HCT116 (cell line): ENCODE measurements at regions of chr11 and their contacts with region 1.

Region 1: GRCh38 chr11:116835791-116836631 is 1.4 kb downstream of the APOA1 start:
- DNase-seq: peak; percentile 88
- ATAC-seq: peak; percentile 95
- H3K4me3 ChIP-seq: peak overlapping the region; percentile 26 to 42
- H3K27ac ChIP-seq: peak overlapping the region; percentile 40; the same call in 1 of the 2 replicates
- H3K4me1 ChIP-seq: peaks cover 8 to 15% of the 10 kb centered on the region in 2 experiments
- H3K27me3 ChIP-seq: no peaks in the 10 kb centered on the region
- CTCF ChIP-seq: peak; percentile 67 to 85 (median 70)
- POLR2A ChIP-seq: no peak
- RAD21 ChIP-seq: peak; percentile 77

Region 2: GRCh38 chr11:116732271-116733042 is 103.6 kb before region 1 on chr11:
- CTCF ChIA-PET with region 1: interaction called, 11 read pairs
- POLR2A ChIA-PET with region 1: no interaction called
- RAD21 ChIA-PET with region 1: interaction called in 1 of 2 experiments, 3 read pairs
- intact Hi-C with region 1: no loop called
- DNase-seq: peak; percentile 45
- ATAC-seq: peak; percentile 94
- H3K4me3 ChIP-seq: no peak overlapping the region
- H3K27ac ChIP-seq: no peak overlapping the region
- H3K4me1 ChIP-seq: peaks cover 0 to 4% of the 10 kb centered on the region in 2 experiments; a peak in 1 of 4 replicates
- H3K27me3 ChIP-seq: no peaks in the 10 kb centered on the region
- CTCF ChIP-seq: peak; percentile 64 to 90 (median 73); a peak in 5 of 6 replicates
- POLR2A ChIP-seq: no peak
- RAD21 ChIP-seq: peak; percentile 60

Region 3: DNA sequence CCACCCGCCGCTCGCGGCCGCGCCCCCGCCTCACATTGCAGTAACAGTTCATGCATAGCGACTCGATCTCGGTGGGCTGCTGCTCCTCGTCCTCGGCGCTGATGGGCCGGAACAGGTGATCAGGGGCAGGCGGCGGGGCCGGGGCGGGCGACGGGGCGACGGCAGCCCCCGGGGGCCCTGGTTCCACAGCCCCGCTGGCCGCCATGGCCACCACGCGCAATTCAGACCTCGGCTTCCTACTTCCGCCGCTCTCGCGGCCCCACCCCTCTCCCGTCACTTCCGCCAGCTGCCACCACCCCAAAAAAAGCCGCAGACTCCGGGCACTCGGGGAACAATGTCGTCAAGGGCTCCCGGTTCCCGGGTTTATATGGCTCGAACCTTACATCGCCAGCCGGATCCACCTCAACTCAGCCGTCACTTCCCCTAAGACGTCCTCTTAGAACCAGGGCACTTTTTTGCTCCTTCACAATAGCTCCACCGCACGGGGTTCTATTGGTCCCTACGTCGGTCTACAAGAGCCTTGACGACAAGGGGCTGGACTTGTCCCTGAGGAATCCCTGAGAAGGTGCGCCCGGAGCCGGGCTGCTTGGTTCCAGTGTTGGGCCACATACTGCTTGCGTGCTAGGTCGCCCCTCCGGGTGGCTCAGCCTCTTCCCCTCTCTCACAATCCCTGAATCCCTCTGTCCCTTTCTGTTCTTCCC is 48.1 kb before region 1 on chr11 and contains the start of gene ZPR1:
- CTCF ChIA-PET with region 1: interaction called, 58 read pairs
- POLR2A ChIA-PET with region 1: interaction called, 9 read pairs
- RAD21 ChIA-PET with region 1: interaction called, 8 to 14 read pairs
- intact Hi-C with region 1: loop called (anchors 1 kb)
- DNase-seq: peak; percentile 56
- ATAC-seq: peak; percentile 80
- H3K4me3 ChIP-seq: peak within 1 kb of the TSS; percentile 93 to 94
- H3K27ac ChIP-seq: peak within 1 kb of the TSS; percentile 43; the same call in 1 of the 2 replicates
- H3K4me1 ChIP-seq: peaks cover 12 to 29% of the 10 kb centered on the region in 2 experiments
- H3K27me3 ChIP-seq: no peaks in the 10 kb centered on the region
- CTCF ChIP-seq: no peak
- POLR2A ChIP-seq: no peak
- RAD21 ChIP-seq: no peak
- total RNA-seq, gene ZPR1: 56.3 TPM

Region 4: DNA sequence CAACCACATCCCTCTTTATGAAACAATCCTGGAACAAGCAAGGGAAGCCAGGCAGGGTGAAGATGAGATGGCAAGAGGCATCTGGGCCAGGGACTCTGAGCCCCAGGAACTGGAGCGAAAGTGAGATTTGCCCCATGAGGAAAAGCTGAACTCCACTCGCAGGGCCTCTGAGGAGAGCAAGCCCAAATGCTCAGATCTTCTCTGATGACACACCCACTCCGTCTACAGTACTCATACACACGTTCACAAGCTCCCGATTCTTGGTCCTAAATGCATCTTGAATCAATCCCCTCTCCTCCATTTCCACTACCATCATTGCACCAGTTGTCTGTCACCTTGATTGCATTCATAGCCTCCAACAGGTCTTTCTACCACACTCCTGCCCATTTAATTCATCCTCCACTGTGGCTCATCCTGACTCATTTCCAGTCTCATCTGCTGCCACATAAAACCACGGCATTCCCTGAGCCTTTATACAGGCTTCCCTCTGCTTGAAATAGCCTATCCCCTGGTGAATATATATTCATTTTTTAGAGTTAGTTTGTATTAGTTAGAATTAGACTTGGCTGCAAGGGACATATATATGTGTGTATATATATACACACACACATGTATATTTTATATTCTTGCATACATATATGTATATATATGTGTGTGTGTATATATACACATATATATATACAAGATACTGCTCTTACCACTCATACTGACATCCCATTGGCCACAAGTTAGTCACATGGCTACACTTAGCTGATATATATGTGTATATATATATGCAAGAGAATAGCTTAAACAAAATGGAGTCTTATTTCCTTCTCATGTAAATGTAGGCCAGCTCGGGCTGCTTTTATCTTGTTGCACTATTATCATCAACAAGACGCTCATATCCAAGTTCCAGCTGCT is 42.9 kb before region 1 on chr11:
- CTCF ChIA-PET with region 1: interaction called, 58 read pairs
- POLR2A ChIA-PET with region 1: interaction called, 9 read pairs
- RAD21 ChIA-PET with region 1: interaction called, 8 to 14 read pairs
- intact Hi-C with region 1: loop called (anchors 1 kb)
- DNase-seq: no peak
- ATAC-seq: no peak; the same call in 1 of the 2 replicates
- H3K4me3 ChIP-seq: no peak overlapping the region
- H3K27ac ChIP-seq: no peak overlapping the region
- H3K4me1 ChIP-seq: peaks cover 7 to 31% of the 10 kb centered on the region in 2 experiments; a peak in 3 of 4 replicates
- H3K27me3 ChIP-seq: no peaks in the 10 kb centered on the region
- CTCF ChIP-seq: no peak
- POLR2A ChIP-seq: no peak
- RAD21 ChIP-seq: no peak

Region 5: DNA sequence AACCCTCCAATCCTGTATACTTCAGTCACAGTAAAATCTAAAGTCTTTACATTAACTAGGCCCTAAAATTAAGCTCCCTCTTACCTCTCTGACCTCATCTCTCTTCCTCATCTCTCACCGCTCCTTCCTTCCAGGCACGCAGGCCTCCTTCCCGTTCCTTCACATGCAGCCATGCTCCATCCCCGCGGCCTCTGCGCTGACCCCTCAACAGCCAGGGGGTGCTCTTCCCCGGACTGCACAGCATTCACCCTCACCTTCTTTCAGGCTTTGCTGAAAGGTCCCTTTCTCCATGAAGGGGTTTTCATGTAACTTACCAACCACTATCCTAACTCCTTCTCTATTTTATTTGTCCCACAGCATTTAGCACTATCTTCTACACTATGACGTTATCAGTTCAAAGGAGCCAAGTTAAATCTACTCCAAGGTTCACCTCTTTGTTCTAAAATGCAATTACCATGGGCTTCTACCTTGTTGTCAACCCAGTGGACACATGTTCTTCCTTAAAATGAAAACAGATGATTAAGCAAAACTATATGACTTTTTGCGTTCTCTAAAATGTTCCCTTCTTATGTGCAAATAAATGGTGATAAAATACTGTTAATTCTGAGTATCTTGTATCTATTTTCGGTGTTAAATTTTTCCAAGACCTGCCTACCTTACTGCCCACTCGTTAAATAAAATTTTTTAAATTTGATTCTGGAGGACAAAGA is 59.2 kb after region 1 on chr11:
- CTCF ChIA-PET with region 1: no interaction called
- POLR2A ChIA-PET with region 1: no interaction called
- RAD21 ChIA-PET with region 1: no interaction called
- intact Hi-C with region 1: no loop called
- DNase-seq: no peak
- ATAC-seq: peak; percentile 68; the same call in 1 of the 2 replicates
- H3K4me3 ChIP-seq: no peak overlapping the region
- H3K27ac ChIP-seq: no peak overlapping the region
- H3K4me1 ChIP-seq: no peaks in the 10 kb centered on the region
- H3K27me3 ChIP-seq: no peaks in the 10 kb centered on the region
- CTCF ChIP-seq: peak in 2 of 3 experiments; percentile 44 to 50; a peak in 4 of 6 replicates
- POLR2A ChIP-seq: no peak
- RAD21 ChIP-seq: 0 out of 2 replicates have a peak, but pooled peaks have one; percentile 28

Region 6: GRCh38 chr11:117107701-117108590 is 271.9 kb after region 1 on chr11:
- CTCF ChIA-PET with region 1: interaction called, 11 read pairs
- POLR2A ChIA-PET with region 1: no interaction called
- RAD21 ChIA-PET with region 1: interaction called in 1 of 2 experiments, 3 read pairs
- intact Hi-C with region 1: no loop called
- DNase-seq: no peak
- ATAC-seq: no peak
- H3K4me3 ChIP-seq: no peak overlapping the region
- H3K27ac ChIP-seq: no peak overlapping the region
- H3K4me1 ChIP-seq: 0 out of 4 replicates have a peak, but pooled peaks cover 0 to 2% of the 10 kb centered on the region in 2 experiments
- H3K27me3 ChIP-seq: no peaks in the 10 kb centered on the region
- CTCF ChIP-seq: no peak
- POLR2A ChIP-seq: no peak
- RAD21 ChIP-seq: no peak